ENCODE measurements at regions of chr1 and their contacts with region 1.

Region 1: DNA sequence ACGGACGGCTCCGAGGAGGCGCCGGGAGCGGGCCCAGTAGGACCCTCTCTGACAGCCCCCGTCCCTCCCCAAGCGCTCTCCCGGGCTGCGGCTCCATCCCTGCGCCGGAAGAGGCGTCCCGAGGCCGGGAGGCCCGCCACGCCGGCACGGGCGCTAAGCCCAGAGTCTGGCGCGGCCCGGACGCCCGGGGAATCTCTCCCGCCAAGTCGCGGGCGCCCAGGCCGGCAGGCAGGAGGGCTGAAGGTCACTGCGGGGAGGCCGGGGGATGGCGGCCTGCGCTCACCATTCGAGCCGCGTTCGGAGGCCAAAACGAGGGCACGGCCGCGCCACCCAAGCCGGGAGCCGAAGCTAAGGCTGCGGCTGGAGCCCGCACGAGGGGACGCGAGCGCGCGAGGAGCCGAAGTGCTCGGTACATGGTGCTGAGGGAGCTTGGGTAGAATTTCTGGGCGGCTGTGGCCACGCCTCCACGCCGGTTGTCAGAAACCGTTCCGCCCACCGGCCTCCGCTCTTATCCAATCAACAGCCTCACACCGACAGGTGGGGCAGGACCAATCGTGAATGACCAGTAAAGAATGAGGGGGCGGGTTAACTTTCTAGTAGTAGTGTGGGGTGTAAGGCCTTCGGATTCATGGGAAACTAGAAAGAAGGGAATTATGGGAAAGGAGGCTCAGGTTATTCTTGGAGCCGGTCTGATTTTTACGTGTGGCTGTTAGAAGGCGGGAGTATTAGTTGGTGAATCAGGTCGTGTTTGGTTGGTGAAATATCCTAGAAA is at the start of gene FH:
- DNase-seq: peak; percentile 97
- ATAC-seq: peak; percentile 98
- total RNA-seq, gene FH: 103 to 119 TPM

Region 2: DNA sequence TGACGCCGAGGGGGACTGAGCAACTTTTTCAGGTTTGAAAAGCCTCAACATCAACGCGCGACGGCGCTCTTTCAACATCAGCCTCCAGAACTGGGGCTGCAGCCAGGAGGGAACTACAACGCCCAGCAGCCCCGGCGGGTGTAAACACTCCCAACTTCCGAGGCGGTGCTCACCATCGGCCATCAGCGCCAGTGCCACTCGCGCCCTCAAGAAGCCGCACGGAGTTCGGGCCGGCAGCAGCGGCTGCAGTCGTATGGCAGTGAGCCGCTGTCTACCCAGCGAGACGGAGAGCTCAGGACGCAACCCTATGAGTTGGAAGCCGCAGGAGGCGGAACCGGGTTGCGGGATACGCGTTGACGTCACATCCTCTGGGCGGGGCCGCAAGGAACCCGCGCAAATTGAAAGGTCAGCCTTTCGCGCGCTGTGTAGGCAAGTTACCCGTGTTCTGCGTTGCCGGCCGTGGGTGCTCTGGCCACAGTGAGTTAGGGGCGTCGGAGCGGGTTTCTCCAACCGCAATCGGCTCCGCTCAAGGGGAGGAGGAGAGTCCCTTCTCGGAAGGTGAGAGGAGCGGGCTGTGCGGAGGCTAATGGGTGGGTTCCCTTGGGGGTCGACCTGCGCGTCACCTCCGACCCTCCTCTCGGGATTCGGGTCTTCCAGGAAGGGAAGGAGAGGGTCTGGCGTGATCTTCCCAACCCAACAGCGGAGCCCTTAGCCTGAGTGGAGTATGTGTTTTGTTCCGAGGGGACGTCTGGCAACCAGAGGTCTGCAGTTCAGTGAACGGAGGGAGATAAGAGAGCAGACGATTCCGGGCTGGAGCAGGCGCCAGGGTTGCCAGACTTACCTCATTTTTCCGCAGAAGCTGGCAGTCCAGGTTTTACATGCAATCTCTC is 328.5 kb after region 1 on chr1 and contains the start of gene EXO1:
- intact Hi-C with region 1: loop called in 1 of 2 experiments (anchors 10 kb)
- DNase-seq: peak; percentile 86 to 92
- ATAC-seq: peak; percentile 98
- total RNA-seq, gene EXO1: 1.4 to 4.7 TPM